ENCODE measurements at regions of chr2 and their contacts with region 1.

Region 1: GRCh38 chr2:158713523-158714138 is 81.5 kb upstream of the DAPL1 start:
- DNase-seq: no peak
- CTCF ChIP-seq: no peak

Region 2: GRCh38 chr2:158644139-158644538 is 69.5 kb before region 1 on chr2:
- CTCF ChIA-PET with region 1: no interaction called
- POLR2A ChIA-PET with region 1: no interaction called
- DNase-seq: no peak
- CTCF ChIP-seq: no peak

Region 3: GRCh38 chr2:158723917-158724690 is 10.5 kb after region 1 on chr2:
- CTCF ChIA-PET with region 1: interaction called, 10 read pairs
- POLR2A ChIA-PET with region 1: no interaction called
- DNase-seq: no peak
- CTCF ChIP-seq: no peak